Activated CD4-positive, alpha-beta T cell treated with anti-CD3 and anti-CD28 coated beads for 36 hours (primary cell): ENCODE measurements at regions of chr17 and their contacts with region 1.

Region 1: GRCh38 chr17:28951991-28952975 is 965 bp upstream of the PHF12 start:
- DNase-seq: peak; percentile 96
- ATAC-seq: peak; percentile 77
- H3K4me3 Mint-ChIP-seq: no peak overlapping the region
- H3K27ac Mint-ChIP-seq: no peak overlapping the region
- H3K4me1 Mint-ChIP-seq: peaks cover 15% of the 10 kb centered on the region
- H3K27me3 Mint-ChIP-seq: no peaks in the 10 kb centered on the region

Region 2: GRCh38 chr17:28598799-28599310 is 353.4 kb before region 1 on chr17 and contains the start of gene SPAG5:
- CTCF ChIA-PET with region 1: no interaction called
- POLR2A ChIA-PET with region 1: no interaction called
- intact Hi-C with region 1: loop called in 1 of 2 experiments (anchors 1 kb)
- DNase-seq: peak; percentile 97
- ATAC-seq: peak; percentile 92
- H3K4me3 Mint-ChIP-seq: peak within 1 kb of the TSS; percentile 89
- H3K27ac Mint-ChIP-seq: peak within 1 kb of the TSS; percentile 98
- H3K4me1 Mint-ChIP-seq: peaks cover 21% of the 10 kb centered on the region
- H3K27me3 Mint-ChIP-seq: no peaks in the 10 kb centered on the region
- total RNA-seq, gene SPAG5: 142 to 165 TPM

Region 3: GRCh38 chr17:28726226-28727130 is 225.8 kb before region 1 on chr17 and contains the start of gene TLCD1:
- CTCF ChIA-PET with region 1: interaction called, 94 read pairs
- POLR2A ChIA-PET with region 1: interaction called, 19 read pairs
- intact Hi-C with region 1: loop called (anchors 1 kb)
- DNase-seq: peak; percentile 97
- ATAC-seq: peak; percentile 35
- H3K4me3 Mint-ChIP-seq: peak within 1 kb of the TSS; percentile 99
- H3K27ac Mint-ChIP-seq: peak within 1 kb of the TSS; percentile 99
- H3K4me1 Mint-ChIP-seq: peaks cover 52% of the 10 kb centered on the region
- H3K27me3 Mint-ChIP-seq: no peaks in the 10 kb centered on the region
- total RNA-seq, gene TLCD1: 8.5 to 8.7 TPM

Region 4: DNA sequence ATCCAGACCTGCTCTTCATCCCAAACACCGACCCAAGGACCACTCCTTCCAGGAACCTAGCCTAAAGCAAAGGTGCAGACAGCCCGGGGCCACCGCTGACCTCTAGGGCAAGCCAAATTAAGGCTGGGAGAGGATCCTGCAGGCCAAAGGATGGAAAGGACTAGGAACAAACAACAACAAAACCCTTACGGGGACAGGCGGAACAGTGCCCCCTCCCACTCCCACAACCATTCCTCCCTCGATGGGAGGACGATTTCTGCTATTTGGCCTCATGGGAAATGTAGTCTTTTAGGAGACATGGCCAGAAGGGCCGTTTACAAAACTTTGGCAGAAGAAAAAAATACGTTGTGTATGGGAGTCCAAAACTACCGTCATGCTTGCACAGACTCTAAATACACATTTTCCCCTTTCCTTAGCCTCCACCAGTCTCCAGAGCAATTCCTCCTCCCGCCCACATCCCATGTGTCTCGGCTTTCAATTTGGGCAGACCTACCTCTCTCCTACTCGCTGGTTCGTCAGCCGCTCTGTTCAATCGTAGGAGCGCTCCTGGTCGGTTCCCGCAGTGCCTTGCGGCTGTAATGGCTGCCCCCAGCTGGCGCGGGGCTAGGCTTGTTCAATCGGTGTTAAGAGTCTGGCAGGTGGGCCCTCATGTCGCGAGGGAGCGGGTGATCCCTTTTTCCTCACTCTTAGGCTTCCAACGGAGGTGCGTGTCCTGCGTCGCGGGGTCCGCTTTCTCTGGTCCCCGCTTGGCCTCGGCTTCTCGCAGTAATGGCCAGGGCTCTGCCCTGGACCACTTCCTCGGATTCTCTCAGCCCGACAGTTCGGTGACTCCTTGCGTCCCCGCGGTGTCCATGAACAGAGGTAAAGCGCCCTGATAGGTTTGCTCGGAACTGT is 97.6 kb before region 1 on chr17 and contains the start of gene ERAL1:
- CTCF ChIA-PET with region 1: interaction called, 7 read pairs
- POLR2A ChIA-PET with region 1: no interaction called
- intact Hi-C with region 1: loop called (anchors 1 to 5 kb)
- DNase-seq: peak; percentile 93
- ATAC-seq: peak; percentile 100
- H3K4me3 Mint-ChIP-seq: peak within 1 kb of the TSS; percentile 80
- H3K27ac Mint-ChIP-seq: peak within 1 kb of the TSS; percentile 81
- H3K4me1 Mint-ChIP-seq: peaks cover 24% of the 10 kb centered on the region
- H3K27me3 Mint-ChIP-seq: no peaks in the 10 kb centered on the region
- total RNA-seq, gene ERAL1: 51.5 to 74.8 TPM

Region 5: DNA sequence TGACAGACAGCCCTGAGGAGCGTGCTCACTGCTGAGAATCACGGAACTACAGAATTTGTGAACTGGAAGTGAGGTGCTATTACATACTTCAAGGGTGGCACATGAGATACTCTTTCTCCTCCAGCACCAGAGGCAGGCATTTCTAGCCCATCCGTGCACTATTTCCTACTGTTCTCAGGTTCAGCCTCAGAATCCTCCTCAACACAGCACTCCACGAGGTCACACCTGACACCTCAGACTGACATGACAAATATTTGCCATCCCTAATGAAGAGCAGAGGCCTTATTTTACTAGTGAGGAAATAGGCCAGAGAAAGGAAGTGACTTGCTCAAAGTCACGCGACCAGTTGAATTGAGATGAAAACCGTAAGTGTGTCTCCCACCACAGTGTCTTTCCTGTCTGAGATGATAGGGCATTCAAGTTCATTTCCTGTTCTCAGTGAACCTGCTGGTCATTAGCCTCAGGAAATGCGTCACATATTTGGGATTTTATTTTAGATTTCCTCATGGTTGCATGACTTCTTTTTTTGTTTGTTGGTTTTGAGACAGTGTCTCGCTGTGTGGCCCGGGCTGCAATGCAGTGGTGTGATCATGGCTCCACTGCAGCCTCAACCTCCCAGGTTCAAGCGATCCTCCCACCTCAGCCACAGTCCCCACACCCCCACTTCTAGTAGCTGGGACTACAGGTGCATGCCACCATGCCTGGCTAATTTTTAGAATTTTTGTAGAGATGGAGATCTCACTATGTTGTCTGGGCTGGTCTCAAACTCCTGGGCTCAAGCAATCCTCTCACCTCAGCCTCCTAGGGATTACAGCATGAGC is 30.1 kb after region 1 on chr17:
- CTCF ChIA-PET with region 1: interaction called, 10 read pairs
- POLR2A ChIA-PET with region 1: no interaction called
- intact Hi-C with region 1: no loop called
- DNase-seq: peak; percentile 65
- ATAC-seq: peak; percentile 90
- H3K4me3 Mint-ChIP-seq: no peak overlapping the region
- H3K27ac Mint-ChIP-seq: peak overlapping the region; percentile 89
- H3K4me1 Mint-ChIP-seq: peaks cover 23% of the 10 kb centered on the region
- H3K27me3 Mint-ChIP-seq: no peaks in the 10 kb centered on the region

Region 6: GRCh38 chr17:29389982-29390850 is 437.9 kb after region 1 on chr17 and contains the start of gene TAOK1:
- CTCF ChIA-PET with region 1: interaction called, 3 read pairs
- POLR2A ChIA-PET with region 1: no interaction called
- intact Hi-C with region 1: loop called in 1 of 2 experiments (anchors 1 kb)
- DNase-seq: peak; percentile 99
- ATAC-seq: peak; percentile 95
- H3K4me3 Mint-ChIP-seq: peak within 1 kb of the TSS; percentile 81
- H3K27ac Mint-ChIP-seq: peak within 1 kb of the TSS; percentile 94
- H3K4me1 Mint-ChIP-seq: peaks cover 36% of the 10 kb centered on the region
- H3K27me3 Mint-ChIP-seq: no peaks in the 10 kb centered on the region
- total RNA-seq, gene TAOK1: 29.9 to 35.1 TPM